Activated CD4-positive, alpha-beta T cell treated with anti-CD3 and anti-CD28 coated beads, Interleukin-2, amount 10 ng/mL, durations not matched to agents 24 days and 14 days (primary cell): ENCODE measurements at regions of chr1 and their contacts with region 1.

Region 1: DNA sequence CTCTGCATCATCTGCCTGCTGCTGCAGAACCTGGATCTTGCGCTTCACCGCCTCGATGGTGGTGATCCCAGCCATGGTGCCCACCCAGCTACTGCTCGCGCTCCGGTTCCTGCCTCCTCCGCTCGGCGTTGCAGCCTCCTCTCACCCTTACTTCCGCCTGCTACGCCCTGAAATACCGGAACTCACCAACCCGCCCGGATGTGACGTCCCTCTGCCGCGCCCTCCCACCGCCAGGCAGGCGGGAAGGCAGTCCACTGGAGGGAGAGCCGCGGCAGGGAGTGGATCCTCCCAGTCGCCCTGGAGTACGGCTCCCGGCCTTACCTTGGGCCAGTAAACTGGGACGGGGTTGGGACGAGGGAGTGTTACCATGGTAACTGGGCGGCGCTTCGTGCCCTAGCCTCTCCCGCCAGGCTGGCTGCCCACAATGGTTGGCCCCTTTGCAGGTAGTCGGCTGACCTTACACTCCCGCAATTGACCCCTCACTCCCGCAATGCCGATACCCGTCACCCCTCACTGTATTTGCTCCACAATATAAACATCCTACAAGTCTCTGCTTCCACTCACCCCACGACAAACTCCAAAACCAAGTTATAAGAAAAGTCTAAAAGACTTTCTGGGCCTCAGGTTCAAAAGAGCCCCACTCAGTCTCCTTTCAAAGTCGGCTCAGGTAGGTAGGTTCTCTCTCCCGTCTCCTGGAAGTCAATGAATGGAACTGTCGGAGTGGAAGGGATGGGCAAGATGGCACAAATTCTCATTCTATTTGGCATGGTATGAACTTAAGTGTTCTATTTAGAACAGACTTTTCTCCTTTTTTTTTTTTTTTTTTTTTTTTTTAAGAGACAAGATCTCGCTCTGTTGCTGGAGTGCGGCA is 8.6 kb downstream of the TPM3 start:
- DNase-seq: peak; percentile 99
- H3K4me3 Mint-ChIP-seq: peak overlapping the region; percentile 99
- H3K27ac Mint-ChIP-seq: peak overlapping the region; percentile 100
- H3K4me1 Mint-ChIP-seq: peaks cover 49% of the 10 kb centered on the region
- H3K27me3 Mint-ChIP-seq: peaks cover 4% of the 10 kb centered on the region

Region 2: GRCh38 chr1:154157520-154158306 is 25.6 kb before region 1 on chr1:
- intact Hi-C with region 1: loop called (anchors 1 kb)
- DNase-seq: peak; percentile 93
- H3K4me3 Mint-ChIP-seq: peak overlapping the region; percentile 74
- H3K27ac Mint-ChIP-seq: peak overlapping the region; percentile 82
- H3K4me1 Mint-ChIP-seq: peaks cover 55% of the 10 kb centered on the region
- H3K27me3 Mint-ChIP-seq: no peaks in the 10 kb centered on the region

Region 3: GRCh38 chr1:154193821-154194220 is 10.5 kb after region 1 on chr1:
- intact Hi-C with region 1: no loop called
- DNase-seq: no peak
- H3K4me3 Mint-ChIP-seq: no peak overlapping the region
- H3K27ac Mint-ChIP-seq: no peak overlapping the region
- H3K4me1 Mint-ChIP-seq: peaks cover 7% of the 10 kb centered on the region
- H3K27me3 Mint-ChIP-seq: peaks cover 36% of the 10 kb centered on the region

Region 4: GRCh38 chr1:154206196-154206595 is 22.9 kb after region 1 on chr1 and contains the start of gene CFAP141:
- intact Hi-C with region 1: loop called (anchors 2 kb)
- DNase-seq: no peak
- H3K4me3 Mint-ChIP-seq: no peak within 1 kb of the TSS
- H3K27ac Mint-ChIP-seq: peak within 1 kb of the TSS; percentile 86
- H3K4me1 Mint-ChIP-seq: peaks cover 26% of the 10 kb centered on the region
- H3K27me3 Mint-ChIP-seq: no peaks in the 10 kb centered on the region
- total RNA-seq, gene CFAP141: not detected in 2 replicates

Region 5: DNA sequence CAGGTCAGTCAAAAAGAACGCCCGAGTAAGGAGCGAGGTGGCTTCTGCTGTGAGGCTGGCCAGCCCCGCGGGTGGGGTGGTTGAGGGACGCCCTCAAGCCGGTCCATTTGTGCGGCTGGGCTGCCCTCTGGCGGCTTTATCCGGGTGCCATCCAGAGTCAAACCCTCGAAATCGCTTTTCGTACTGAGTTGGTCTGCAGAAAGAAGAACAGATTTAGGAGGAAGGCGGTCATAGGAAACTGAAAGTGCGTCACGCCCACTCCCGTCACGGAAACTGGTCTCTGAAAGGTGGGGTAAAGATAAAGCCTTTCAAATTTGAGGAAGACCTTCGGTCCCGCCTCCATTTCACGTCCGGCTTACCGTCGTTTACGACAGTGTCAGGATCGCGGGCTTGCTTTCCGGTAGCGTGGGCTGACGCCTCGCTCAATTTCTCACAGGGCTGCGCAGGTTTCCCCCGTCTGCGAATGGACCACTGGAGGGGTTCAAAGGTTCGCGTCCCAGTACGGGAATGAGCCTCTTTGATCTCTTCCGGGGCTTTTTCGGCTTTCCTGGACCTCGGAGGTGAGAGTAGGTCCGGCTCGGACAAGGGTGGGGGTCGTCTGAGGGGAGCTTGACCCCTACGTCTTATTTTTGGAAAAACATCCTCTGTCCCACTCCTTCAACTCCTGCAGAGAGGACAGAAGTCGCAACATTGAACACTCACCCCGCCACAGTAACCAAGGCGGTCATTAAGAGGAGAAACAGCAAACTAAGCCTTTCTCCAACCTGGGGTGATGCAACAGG is 89.1 kb after region 1 on chr1 and contains the start of gene HAX1:
- intact Hi-C with region 1: loop called (anchors 1 kb)
- DNase-seq: peak; percentile 98
- H3K4me3 Mint-ChIP-seq: peak within 1 kb of the TSS; percentile 97
- H3K27ac Mint-ChIP-seq: peak within 1 kb of the TSS; percentile 98
- H3K4me1 Mint-ChIP-seq: peaks cover 39% of the 10 kb centered on the region
- H3K27me3 Mint-ChIP-seq: no peaks in the 10 kb centered on the region
- total RNA-seq, gene HAX1: 114 and 118 TPM in 2 replicates

Region 6: GRCh38 chr1:154335025-154335714 is 151.9 kb after region 1 on chr1:
- intact Hi-C with region 1: loop called (anchors 1 kb)
- DNase-seq: peak; percentile 96
- H3K4me3 Mint-ChIP-seq: peak overlapping the region; percentile 33
- H3K27ac Mint-ChIP-seq: peak overlapping the region; percentile 82
- H3K4me1 Mint-ChIP-seq: peaks cover 60% of the 10 kb centered on the region
- H3K27me3 Mint-ChIP-seq: no peaks in the 10 kb centered on the region